ENCODE measurements at regions of chr6 and their contacts with region 1.

Region 1: DNA sequence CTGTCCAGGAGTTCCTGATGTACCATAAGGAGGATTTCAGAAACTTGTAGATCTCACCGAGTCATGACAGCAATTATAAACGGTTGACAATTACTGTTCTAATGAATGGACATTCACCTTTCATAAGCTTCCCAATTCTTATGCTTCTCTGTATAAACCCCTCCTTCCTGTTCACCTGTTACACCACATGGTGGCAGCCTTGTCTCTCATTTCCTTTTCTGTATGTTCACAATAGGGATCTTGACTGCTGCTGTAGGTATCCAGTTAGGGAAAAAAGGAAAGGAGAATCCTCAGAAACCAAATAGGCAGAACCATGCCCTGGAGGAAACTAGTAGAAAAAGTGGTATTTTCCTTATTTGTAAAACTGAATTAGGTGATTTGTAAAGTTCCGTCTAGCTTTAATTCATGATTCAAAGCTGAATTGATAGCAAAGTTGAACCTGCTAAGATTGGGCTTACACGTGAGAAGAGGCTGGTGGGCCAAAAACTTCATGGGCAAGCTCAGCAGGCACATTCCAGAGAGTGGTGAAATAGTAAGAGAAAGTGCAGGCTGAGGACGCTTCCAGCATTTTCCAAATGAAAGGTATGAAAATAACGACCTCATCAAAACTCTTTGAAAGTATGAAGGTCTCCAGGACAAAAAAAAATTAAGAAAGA is 29.0 kb upstream of the TBPL1 start:
- DNase-seq: no peak
- H3K4me3 ChIP-seq: no peak overlapping the region
- H3K27ac ChIP-seq: no peak overlapping the region
- H3K4me1 ChIP-seq: peaks cover 0 to 7% (median 0%) of the 10 kb centered on the region in 6 donors
- H3K27me3 ChIP-seq: peaks cover 0 to 40% (median 9%) of the 10 kb centered on the region in 7 donors
- CTCF ChIP-seq: peak; percentile 75 to 90 (median 83)
- POLR2A ChIP-seq: no peak

Region 2: GRCh38 chr6:134063966-134064445 is 139.9 kb after region 1 on chr6:
- intact Hi-C with region 1: loop called (anchors 10 kb)
- DNase-seq: no peak
- H3K4me3 ChIP-seq: no peak overlapping the region
- H3K27ac ChIP-seq: no peak overlapping the region
- H3K4me1 ChIP-seq: no peaks in the 10 kb centered on the region
- H3K27me3 ChIP-seq: no peaks in the 10 kb centered on the region
- CTCF ChIP-seq: peak; percentile 52 to 86 (median 73)
- POLR2A ChIP-seq: no peak

Region 3: GRCh38 chr6:134094441-134094840 is 170.4 kb after region 1 on chr6:
- intact Hi-C with region 1: loop called (anchors 2 kb)
- DNase-seq: no peak
- H3K4me3 ChIP-seq: no peak overlapping the region
- H3K27ac ChIP-seq: no peak overlapping the region
- H3K4me1 ChIP-seq: no peaks in the 10 kb centered on the region
- H3K27me3 ChIP-seq: no peaks in the 10 kb centered on the region
- CTCF ChIP-seq: no peak
- POLR2A ChIP-seq: no peak